Tibial artery (tissue), 4 donors: ENCODE measurements at regions of chr9 and their contacts with region 1.

Region 1: GRCh38 chr9:26746357-26747072 is 146.1 kb downstream of the CAAP1 start:
- DNase-seq: no peak
- H3K4me3 ChIP-seq: no peak overlapping the region
- H3K27ac ChIP-seq: no peak overlapping the region
- H3K4me1 ChIP-seq: no peaks in the 10 kb centered on the region
- H3K27me3 ChIP-seq: no peaks in the 10 kb centered on the region
- CTCF ChIP-seq: no peak

Region 2: GRCh38 chr9:26975693-26976059 is 229.2 kb after region 1 on chr9:
- intact Hi-C with region 1: loop called (anchors 5 kb)
- DNase-seq: no peak
- H3K4me3 ChIP-seq: no peak overlapping the region
- H3K27ac ChIP-seq: no peak overlapping the region
- H3K4me1 ChIP-seq: peaks cover 0 to 9% (median 4%) of the 10 kb centered on the region in 4 donors
- H3K27me3 ChIP-seq: no peaks in the 10 kb centered on the region
- CTCF ChIP-seq: peak; percentile 32 to 44